Endothelial cell of umbilical vein (primary cell): ENCODE measurements at regions of chr16 and their contacts with region 1.

Region 1: GRCh38 chr16:50185005-50185505 is 31.9 kb downstream of the TENT4B start:
- DNase-seq: peak; percentile 60
- H3K4me3 ChIP-seq: no peak overlapping the region
- H3K27ac ChIP-seq: no peak overlapping the region
- H3K4me1 ChIP-seq: peaks cover 16% of the 10 kb centered on the region
- H3K27me3 ChIP-seq: no peaks in the 10 kb centered on the region
- CTCF ChIP-seq: no peak
- POLR2A ChIP-seq: no peak

Region 2: GRCh38 chr16:50166511-50167500 is 18.2 kb before region 1 on chr16:
- CTCF ChIA-PET with region 1: interaction called, 3 read pairs
- POLR2A ChIA-PET with region 1: no interaction called
- dilution Hi-C with region 1: no loop called
- intact Hi-C with region 1: loop called (anchors 2 kb)
- DNase-seq: peak; percentile 47
- H3K4me3 ChIP-seq: no peak overlapping the region
- H3K27ac ChIP-seq: peak overlapping the region; percentile 57
- H3K4me1 ChIP-seq: peaks cover 14% of the 10 kb centered on the region
- H3K27me3 ChIP-seq: no peaks in the 10 kb centered on the region
- CTCF ChIP-seq: no peak
- POLR2A ChIP-seq: no peak

Region 3: GRCh38 chr16:50202926-50203624 is 18.0 kb after region 1 on chr16:
- CTCF ChIA-PET with region 1: interaction called, 7 read pairs
- POLR2A ChIA-PET with region 1: interaction called, 7 read pairs
- dilution Hi-C with region 1: no loop called
- intact Hi-C with region 1: loop called (anchors 2 kb)
- DNase-seq: peak; percentile 88
- H3K4me3 ChIP-seq: peak overlapping the region in 1 of 3 experiments; percentile 12
- H3K27ac ChIP-seq: peak overlapping the region; percentile 93
- H3K4me1 ChIP-seq: peaks cover 30% of the 10 kb centered on the region
- H3K27me3 ChIP-seq: no peaks in the 10 kb centered on the region
- CTCF ChIP-seq: no peak
- POLR2A ChIP-seq: no peak

Region 4: GRCh38 chr16:50354629-50355456 is 169.8 kb after region 1 on chr16:
- CTCF ChIA-PET with region 1: no interaction called
- POLR2A ChIA-PET with region 1: no interaction called
- dilution Hi-C with region 1: no loop called
- intact Hi-C with region 1: no loop called
- DNase-seq: peak; percentile 33
- H3K4me3 ChIP-seq: no peak overlapping the region
- H3K27ac ChIP-seq: no peak overlapping the region
- H3K4me1 ChIP-seq: no peaks in the 10 kb centered on the region
- H3K27me3 ChIP-seq: no peaks in the 10 kb centered on the region
- CTCF ChIP-seq: peak; percentile 25 to 37
- POLR2A ChIP-seq: no peak